HCT116 (cell line): ENCODE measurements at regions of chr9 and their contacts with region 1.

Region 1: DNA sequence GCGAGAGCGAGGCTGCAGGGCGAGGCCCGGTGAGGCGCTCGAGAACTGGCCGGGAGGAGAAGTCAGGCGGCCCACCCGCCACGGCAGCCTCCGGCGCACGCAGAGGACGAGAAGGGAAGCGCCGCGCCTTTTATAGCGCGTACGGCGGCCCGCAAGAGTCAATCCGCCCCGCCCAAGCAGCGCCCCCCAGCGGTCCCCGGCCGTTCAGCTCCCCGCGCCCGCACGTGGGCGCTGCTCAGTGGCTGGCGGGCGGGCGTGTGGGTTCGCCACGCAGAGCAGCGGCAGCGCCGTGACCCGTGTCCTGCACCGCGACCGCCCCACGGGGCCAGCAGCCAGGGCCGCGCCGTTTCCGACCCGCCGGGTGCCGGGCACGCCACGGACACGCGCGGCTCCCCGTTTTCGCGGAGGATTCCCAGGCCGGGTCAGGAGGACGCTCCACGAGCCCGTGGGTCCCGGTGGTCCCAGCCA is 14.6 kb downstream of the LCN10 start:
- DNase-seq: peak; percentile 60
- ATAC-seq: peak; percentile 47
- H3K4me3 ChIP-seq: peak overlapping the region; percentile 93 to 100
- H3K27ac ChIP-seq: peak overlapping the region; percentile 97
- H3K4me1 ChIP-seq: peaks cover 13 to 48% of the 10 kb centered on the region in 2 experiments
- H3K27me3 ChIP-seq: no peaks in the 10 kb centered on the region
- CTCF ChIP-seq: peak in 2 of 3 experiments; percentile 71 to 85; a peak in 4 of 6 replicates
- POLR2A ChIP-seq: peak; percentile 97
- RAD21 ChIP-seq: no peak

Region 2: GRCh38 chr9:136742591-136743391 is 14.7 kb after region 1 on chr9 and contains the start of gene LCN10:
- CTCF ChIA-PET with region 1: interaction called, 3 read pairs
- POLR2A ChIA-PET with region 1: interaction called, 10 read pairs
- RAD21 ChIA-PET with region 1: no interaction called
- intact Hi-C with region 1: no loop called
- DNase-seq: no peak
- ATAC-seq: peak; percentile 85
- H3K4me3 ChIP-seq: no peak within 1 kb of the TSS
- H3K27ac ChIP-seq: no peak within 1 kb of the TSS
- H3K4me1 ChIP-seq: no peaks in the 10 kb centered on the region
- H3K27me3 ChIP-seq: no peaks in the 10 kb centered on the region
- CTCF ChIP-seq: peak in 2 of 3 experiments; percentile 48 to 71; a peak in 4 of 6 replicates
- POLR2A ChIP-seq: no peak
- RAD21 ChIP-seq: no peak
- total RNA-seq, gene LCN10: not detected

Region 3: GRCh38 chr9:136965771-136966484 is 237.8 kb after region 1 on chr9:
- CTCF ChIA-PET with region 1: no interaction called
- POLR2A ChIA-PET with region 1: no interaction called
- RAD21 ChIA-PET with region 1: no interaction called
- intact Hi-C with region 1: no loop called
- DNase-seq: no peak
- ATAC-seq: no peak
- H3K4me3 ChIP-seq: no peak overlapping the region
- H3K27ac ChIP-seq: no peak overlapping the region
- H3K4me1 ChIP-seq: peaks cover 11 to 28% of the 10 kb centered on the region in 2 experiments
- H3K27me3 ChIP-seq: no peaks in the 10 kb centered on the region
- CTCF ChIP-seq: no peak
- POLR2A ChIP-seq: no peak
- RAD21 ChIP-seq: no peak